ENCODE measurements at regions of chr10 and their contacts with region 1.

Region 1: DNA sequence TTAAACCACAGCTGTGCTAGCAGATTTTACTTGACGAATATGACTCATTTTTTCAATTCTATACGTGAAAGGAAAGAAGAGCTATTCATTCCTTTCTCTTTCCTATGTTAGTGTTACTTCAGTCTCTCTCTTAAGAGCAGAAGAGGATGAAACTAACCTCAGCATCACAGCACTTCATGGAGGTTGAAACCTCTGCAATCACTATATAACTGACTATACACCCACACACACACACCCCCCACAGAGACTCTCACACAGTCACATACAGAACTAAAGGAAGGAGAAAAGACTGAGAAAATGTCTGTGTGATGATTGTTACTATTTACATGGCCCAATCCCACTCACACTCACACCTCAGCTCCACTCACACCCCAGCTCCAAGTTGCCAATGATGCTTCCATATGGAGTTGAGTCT is 104.2 kb downstream of the KIF20B start:
- DNase-seq: peak; percentile 87
- ATAC-seq: peak; percentile 98
- H3K4me3 Mint-ChIP-seq: no peak overlapping the region
- H3K27ac Mint-ChIP-seq: peak overlapping the region; percentile 55
- H3K4me1 Mint-ChIP-seq: peaks cover 26% of the 10 kb centered on the region
- H3K27me3 Mint-ChIP-seq: peaks cover 34% of the 10 kb centered on the region

Region 2: DNA sequence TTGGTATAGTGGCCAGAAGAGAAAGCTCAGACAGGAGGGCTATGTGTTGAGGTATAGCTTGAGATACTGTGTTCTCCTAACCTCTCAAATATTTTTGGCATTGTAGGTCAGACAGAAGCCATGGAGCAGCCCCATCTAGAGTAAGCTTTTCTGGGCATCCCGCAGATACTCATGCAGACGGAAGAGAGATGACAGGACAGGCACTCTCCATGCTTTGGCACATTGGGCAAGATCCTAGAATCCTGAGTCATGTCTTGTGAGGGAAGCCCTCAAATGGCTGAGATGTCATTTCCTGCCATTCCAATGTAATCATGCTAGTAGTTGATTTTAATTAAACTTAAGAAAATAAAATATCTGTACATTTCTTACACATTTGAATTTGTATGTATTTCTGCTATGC is 121.0 kb before region 1 on chr10:
- CTCF ChIA-PET with region 1: no interaction called
- POLR2A ChIA-PET with region 1: no interaction called
- intact Hi-C with region 1: no loop called
- DNase-seq: no peak
- ATAC-seq: no peak
- H3K4me3 Mint-ChIP-seq: no peak overlapping the region
- H3K27ac Mint-ChIP-seq: no peak overlapping the region
- H3K4me1 Mint-ChIP-seq: no peaks in the 10 kb centered on the region
- H3K27me3 Mint-ChIP-seq: peaks cover 16% of the 10 kb centered on the region

Region 3: GRCh38 chr10:89837150-89837888 is 31.7 kb after region 1 on chr10:
- CTCF ChIA-PET with region 1: no interaction called
- POLR2A ChIA-PET with region 1: no interaction called
- intact Hi-C with region 1: loop called in 1 of 2 experiments (anchors 2 kb)
- DNase-seq: peak; percentile 53
- ATAC-seq: peak; percentile 62
- H3K4me3 Mint-ChIP-seq: peak overlapping the region; percentile 70
- H3K27ac Mint-ChIP-seq: peak overlapping the region; percentile 40
- H3K4me1 Mint-ChIP-seq: peaks cover 15% of the 10 kb centered on the region
- H3K27me3 Mint-ChIP-seq: peaks cover 7% of the 10 kb centered on the region

Region 4: GRCh38 chr10:89861584-89862301 is 56.1 kb after region 1 on chr10:
- CTCF ChIA-PET with region 1: interaction called, 7 read pairs
- POLR2A ChIA-PET with region 1: interaction called, 7 read pairs
- intact Hi-C with region 1: loop called (anchors 1 kb)
- DNase-seq: peak; percentile 65
- ATAC-seq: peak; percentile 98
- H3K4me3 Mint-ChIP-seq: no peak overlapping the region
- H3K27ac Mint-ChIP-seq: peak overlapping the region; percentile 81
- H3K4me1 Mint-ChIP-seq: peaks cover 24% of the 10 kb centered on the region
- H3K27me3 Mint-ChIP-seq: no peaks in the 10 kb centered on the region

Region 5: GRCh38 chr10:90087197-90088007 is 281.8 kb after region 1 on chr10:
- CTCF ChIA-PET with region 1: no interaction called
- POLR2A ChIA-PET with region 1: no interaction called
- intact Hi-C with region 1: loop called (anchors 1 to 2 kb)
- DNase-seq: peak; percentile 36
- ATAC-seq: peak; percentile 96
- H3K4me3 Mint-ChIP-seq: no peak overlapping the region
- H3K27ac Mint-ChIP-seq: no peak overlapping the region
- H3K4me1 Mint-ChIP-seq: peaks cover 8% of the 10 kb centered on the region
- H3K27me3 Mint-ChIP-seq: peaks cover 2% of the 10 kb centered on the region

Region 6: DNA sequence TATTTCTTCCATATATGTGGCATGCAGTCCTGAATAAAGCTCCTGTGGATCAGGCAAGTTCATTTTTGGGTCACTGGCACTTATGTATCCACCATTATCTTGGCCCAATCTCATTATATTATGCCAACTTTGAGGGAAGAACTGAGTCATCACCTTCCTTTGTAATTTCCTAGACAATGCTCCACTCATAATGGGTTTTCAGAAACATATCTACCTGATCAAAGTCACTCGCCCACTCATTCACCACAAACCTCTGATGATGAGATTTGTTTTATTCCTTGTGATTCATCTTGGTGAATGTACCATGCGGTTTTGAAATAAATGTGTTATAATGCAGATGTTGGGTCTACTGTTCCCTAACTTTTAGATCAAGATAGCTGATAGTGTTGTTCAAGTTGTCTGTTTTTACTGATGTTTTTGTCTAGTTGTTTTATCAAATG is 421.6 kb after region 1 on chr10:
- CTCF ChIA-PET with region 1: no interaction called
- POLR2A ChIA-PET with region 1: no interaction called
- intact Hi-C with region 1: loop called (anchors 1 kb)
- DNase-seq: peak; percentile 79
- ATAC-seq: peak; percentile 94
- H3K4me3 Mint-ChIP-seq: no peak overlapping the region
- H3K27ac Mint-ChIP-seq: no peak overlapping the region
- H3K4me1 Mint-ChIP-seq: peaks cover 20% of the 10 kb centered on the region
- H3K27me3 Mint-ChIP-seq: peaks cover 35% of the 10 kb centered on the region

Measured in activated CD4-positive, alpha-beta T cell treated with anti-CD3 and anti-CD28 coated beads for 36 hours (primary cell).